Left cardiac atrium (tissue), 4 donors: ENCODE measurements at regions of chr19 and their contacts with region 1.

Region 1: GRCh38 chr19:43595999-43596841 is at the starts of genes IRGQ and ZNF576:
- DNase-seq: peak; percentile 100
- ATAC-seq: peak; percentile 94 to 96
- total RNA-seq, gene IRGQ: 18.3 to 27.8 TPM
- total RNA-seq, gene ZNF576: 10.7 to 12.3 TPM

Region 2: DNA sequence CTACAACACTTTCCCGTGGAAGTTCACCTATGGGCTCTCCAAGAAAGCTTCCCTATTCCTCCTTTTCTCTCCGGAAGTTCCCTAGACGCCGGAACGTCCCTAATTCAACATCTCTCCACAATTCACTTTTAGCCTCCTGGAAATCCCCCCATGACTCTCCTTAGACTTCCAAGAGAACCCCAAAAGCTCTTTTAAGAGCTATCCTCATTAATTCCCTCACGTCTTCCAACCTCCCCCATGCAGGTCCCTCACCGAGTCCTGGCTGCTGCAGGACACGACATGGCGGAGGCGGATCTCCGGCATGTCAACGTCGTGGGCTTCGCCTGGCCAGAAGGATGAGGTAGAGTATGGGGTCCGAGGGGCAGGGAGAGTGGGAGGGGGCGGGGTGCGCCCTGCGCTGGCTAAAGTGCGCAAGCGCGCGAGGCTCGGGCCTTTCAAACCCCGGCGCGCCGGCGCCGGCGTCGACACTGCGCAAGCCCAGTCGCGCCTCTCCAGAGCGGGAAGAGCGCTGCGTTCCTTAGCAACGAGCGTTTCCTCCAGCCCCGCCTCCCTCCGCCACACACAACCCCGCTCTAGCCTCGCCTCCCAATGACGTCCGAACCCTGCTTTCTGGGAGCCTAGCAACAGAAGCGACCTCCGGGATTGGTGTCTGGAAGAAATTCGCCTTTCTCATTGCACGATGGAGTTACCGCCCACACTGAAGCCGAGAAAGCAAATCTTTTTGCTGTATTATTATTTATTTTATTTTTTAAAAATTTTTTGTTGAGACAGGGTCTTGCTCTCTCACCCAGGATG is 20.9 kb before region 1 on chr19 and contains the starts of genes PINLYP and XRCC1:
- intact Hi-C with region 1: loop called in 1 of 2 experiments (anchors 1 kb)
- DNase-seq: peak; percentile 99
- ATAC-seq: peak; percentile 99 to 100
- total RNA-seq, gene PINLYP: 3.2 to 4.0 TPM
- total RNA-seq, gene XRCC1: 14.0 to 17.4 TPM

Region 3: DNA sequence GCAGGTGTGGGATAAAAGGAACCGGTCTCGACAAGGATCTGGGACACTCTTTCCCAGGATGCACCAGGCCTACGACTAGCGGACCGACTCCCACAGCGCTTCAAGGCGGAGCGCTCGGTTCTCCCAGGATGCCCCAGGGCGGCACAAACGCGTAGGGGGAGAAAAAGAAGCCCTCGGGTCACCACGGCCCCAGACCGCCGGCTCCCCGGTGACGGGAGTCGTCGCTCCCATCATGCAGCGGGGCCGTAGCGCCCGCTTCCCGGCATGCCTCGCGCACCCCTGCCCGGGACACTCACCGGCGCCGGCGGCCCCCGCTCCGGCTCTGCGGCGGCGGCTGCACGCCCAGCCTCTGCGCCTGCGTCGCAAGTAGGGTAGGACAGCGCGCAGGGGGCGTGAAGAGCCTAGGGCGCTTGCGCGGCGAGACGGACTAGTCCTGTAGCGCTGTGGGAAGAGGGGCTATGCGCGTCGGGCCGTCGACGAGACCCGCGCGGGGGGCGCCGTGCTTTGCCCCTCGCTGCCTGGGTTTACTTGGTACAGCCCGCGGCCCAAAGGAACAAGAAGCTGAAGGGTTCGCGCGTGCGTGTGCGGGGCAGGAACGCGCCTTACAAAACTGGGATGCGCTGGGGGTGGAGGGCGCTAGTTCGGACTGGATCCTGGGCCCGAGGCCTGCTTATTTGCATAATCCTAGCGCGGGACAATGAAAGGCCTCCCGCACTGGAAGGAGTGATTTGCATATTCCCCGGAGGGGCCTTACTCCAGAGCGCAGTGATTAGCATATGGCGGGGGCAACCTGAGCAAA is 23.2 kb after region 1 on chr19 and contains the start of gene ZNF428:
- intact Hi-C with region 1: loop called in 1 of 2 experiments (anchors 1 kb)
- DNase-seq: peak; percentile 88
- ATAC-seq: peak; percentile 96 to 97
- total RNA-seq, gene ZNF428: 34.2 to 38.7 TPM

Region 4: DNA sequence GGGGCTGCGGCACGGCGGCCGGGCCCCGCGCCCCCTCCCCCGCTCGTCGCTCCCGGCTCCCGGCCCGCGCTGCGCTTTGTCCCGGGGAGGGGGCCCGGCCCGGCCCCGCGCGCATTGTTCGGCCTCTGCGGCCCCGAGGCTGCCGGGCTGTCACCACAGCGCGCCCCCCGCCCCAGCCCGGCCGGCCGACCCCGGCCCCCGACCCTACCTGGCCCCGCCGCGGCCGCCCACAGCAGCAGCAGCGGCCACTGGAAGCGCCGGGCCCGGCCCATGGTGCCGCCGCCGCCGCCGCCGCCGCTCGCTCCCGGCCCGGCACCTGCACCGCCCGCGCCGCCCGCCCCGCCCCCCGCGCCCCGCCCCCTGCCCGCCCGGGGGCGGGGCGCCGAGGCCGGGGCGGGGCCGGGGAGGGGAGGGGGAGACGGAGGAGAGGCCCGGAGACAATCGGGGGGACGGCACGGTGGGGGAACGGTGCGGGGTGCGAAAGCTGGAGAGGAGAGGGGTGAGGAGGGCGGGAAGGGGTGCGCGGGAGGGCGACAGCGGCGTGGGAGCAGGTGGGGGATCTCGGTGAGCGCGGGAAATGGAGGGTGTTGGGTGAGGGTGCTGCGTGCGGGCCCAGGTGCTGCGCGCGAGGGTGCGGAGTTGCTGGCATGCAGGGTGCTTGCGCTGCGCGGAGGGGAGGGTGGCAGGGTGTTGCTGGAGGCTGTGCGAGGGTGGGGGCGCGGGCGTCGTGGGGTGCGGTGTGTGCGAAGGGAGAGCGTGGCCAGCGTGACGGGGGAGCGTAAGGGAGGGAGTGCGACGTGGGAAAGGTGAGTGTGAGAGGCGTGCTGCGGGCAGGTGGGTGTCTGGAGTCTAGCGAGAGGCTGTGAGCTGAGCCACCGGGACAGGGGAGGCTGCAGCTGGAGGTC is 43.6 kb after region 1 on chr19 and contains the start of gene CADM4:
- intact Hi-C with region 1: no loop called
- DNase-seq: no peak
- ATAC-seq: peak; percentile 72 to 83
- total RNA-seq, gene CADM4: 10.1 to 13.7 TPM

Region 5: DNA sequence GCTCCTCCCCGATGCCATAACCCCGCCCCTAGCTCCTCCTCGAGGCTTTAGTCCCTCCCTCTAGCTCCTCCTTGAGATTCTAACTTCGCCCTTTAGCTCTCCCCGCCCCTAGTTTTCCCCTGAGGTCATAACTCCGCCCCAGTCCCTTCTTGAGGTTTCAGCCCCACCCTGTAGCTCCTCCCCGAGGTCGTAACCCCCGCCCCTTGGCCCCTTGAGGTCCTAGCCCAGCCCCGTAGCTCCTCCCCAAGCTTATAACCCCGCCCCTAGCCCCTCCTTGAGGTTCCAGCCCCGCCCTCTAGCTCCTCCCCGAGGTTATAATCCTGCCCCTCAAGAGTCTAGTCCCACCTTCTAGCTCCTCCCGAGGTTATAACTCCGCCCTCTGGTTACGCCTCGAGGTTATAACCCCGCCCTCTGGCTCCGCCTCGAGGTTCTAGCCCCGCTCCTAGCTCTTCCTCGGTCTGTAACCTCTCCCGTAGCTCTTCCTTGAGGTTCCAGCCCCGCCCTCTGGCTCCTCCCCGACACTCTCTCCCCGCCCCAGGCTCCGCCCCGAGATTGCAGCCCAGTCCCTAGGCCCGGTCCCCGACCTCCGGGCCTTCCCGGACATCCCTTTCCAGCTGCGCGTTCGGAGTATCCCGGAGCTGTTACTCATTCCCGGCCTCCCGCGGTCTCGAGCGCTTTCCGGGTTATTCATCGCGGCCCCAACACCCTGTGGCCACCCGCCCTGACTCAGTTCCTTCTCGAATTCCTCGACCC is 72.4 kb after region 1 on chr19:
- intact Hi-C with region 1: no loop called
- DNase-seq: peak; percentile 99
- ATAC-seq: peak; percentile 89 to 92

Region 6: DNA sequence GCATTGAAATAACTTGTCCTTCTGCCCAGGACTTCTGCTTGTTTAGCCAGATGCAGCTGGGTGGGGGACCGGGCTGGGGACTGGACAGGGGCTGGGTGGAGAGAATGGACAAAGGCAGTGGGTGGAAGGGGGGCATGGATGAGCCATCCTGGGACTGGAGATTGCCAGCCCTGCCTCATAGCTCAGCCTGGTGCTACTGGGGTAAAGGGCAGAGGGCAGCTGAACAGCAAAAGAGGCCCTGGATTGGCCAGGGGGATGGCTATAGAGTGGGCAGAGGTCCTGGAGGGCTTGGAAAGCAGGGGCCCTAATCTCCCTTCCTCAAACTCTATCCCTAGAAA is 91.4 kb after region 1 on chr19:
- intact Hi-C with region 1: no loop called
- DNase-seq: no peak
- ATAC-seq: no peak

Region 7: DNA sequence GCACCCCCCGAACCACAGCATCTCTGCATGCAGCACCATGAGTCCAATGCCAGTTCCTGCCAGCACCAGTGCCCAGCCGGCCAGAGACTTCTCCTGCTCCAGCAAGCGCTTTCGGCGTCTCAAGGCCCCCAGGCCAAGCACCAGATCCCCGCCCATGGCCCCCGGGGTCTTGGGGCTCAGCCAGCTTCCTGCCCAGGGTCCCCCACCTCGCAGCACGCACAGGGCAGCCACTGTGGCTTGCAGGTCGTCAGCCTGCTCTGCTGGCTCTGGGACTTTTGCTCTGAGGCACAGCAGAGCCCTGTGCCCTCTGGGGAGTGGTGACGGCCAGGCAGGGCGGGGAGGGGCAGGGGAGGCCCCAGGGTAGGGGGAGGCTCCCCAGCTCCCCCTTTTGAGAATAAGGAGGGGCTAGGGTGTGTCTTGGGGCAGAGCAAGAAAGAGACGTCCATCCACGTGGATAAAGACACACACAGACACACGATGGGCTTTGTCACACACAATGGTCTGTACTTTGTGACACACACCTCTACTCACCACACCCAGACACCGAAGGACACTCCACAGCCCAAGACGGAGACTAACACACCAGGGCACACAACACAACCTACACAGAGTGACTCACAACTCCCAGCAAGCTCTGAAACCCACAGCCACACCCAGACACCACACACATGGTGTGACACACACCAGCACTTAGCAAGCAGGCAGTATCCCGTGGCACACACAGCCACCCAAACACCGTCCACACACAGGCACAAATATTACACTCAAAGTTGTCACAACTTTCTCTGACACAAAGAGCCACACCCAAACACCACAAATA is 184.7 kb after region 1 on chr19 and contains the start of gene KCNN4:
- intact Hi-C with region 1: no loop called
- DNase-seq: no peak
- ATAC-seq: no peak
- total RNA-seq, gene KCNN4: 0.71 to 1.4 TPM